Body of pancreas (tissue), 4 donors: ENCODE measurements at regions of chrX and their contacts with region 1.

Region 1: DNA sequence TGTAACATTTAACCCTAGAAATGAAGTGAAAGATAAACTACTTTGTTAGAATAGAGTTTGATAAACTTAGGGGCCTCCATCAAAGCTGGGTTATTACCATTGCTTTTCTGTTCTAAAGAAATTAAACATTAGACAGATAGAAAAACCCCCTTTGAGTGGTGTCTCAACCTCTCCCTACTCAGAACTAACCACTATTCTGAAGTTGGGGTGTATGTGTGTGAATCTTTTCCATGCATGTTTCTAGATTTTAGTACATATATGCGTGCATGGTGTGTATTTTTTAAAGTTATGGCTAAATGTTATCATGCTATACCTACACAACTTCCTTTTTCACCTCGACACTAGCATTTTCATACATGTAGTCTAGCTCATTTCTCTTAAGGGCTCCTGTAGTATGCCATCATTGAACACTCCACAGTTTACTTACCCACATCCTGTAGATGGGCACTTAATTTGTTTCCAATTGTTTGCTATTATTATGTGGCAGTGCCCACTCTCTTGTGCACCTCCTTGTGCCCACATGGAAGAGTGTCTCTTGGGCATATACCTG is 25.7 kb downstream of the GEMIN8 start:
- DNase-seq: no peak
- ATAC-seq: no peak
- H3K4me3 ChIP-seq: no peak overlapping the region
- H3K27ac ChIP-seq: no peak overlapping the region
- H3K4me1 ChIP-seq: no peaks in the 10 kb centered on the region
- H3K27me3 ChIP-seq: no peaks in the 10 kb centered on the region
- CTCF ChIP-seq: no peak
- POLR2A ChIP-seq: no peak

Region 2: DNA sequence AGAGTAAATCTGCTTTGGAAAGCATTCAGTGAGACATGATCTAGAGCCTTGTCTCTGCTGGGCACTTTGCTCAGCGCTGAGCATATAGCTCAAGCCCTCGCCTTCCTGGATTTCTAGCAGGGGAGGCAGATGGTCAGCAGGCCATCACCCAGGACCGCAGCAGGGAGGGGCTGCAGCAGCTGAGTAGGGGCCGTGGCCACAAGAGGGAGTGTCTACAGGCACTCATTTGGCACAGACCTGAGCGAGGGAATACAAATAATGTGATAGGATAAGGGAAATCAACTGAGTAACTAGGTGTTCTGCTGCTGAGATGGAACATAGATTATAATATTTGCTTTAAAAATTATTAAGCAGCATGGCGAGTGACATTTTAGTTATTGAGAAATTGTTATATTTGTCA is 239.2 kb before region 1 on chrX:
- intact Hi-C with region 1: loop called (anchors 10 kb)
- DNase-seq: peak; percentile 36 to 65 (median 46)
- ATAC-seq: peak; percentile 80
- H3K4me3 ChIP-seq: no peak overlapping the region
- H3K27ac ChIP-seq: peak overlapping the region in 2 of 4 donors; percentile 12 to 52
- H3K4me1 ChIP-seq: peaks cover 16% of the 10 kb centered on the region
- H3K27me3 ChIP-seq: no peaks in the 10 kb centered on the region
- CTCF ChIP-seq: peak in 5 of 7 experiments; percentile 24 to 48 (median 36)
- POLR2A ChIP-seq: no peak